Posterior cingulate gyrus (tissue), 11 donors: ENCODE measurements at regions of chrX and their contacts with region 1.

Region 1: GRCh38 chrX:119871599-119872395 is at the starts of genes NDUFA1 and RNF113A:
- DNase-seq: peak; percentile 70 to 97 (median 79)

Region 2: GRCh38 chrX:119852382-119853353 is 19.1 kb before region 1 on chrX and contains the start of gene UPF3B:
- intact Hi-C with region 1: loop called (anchors 2 kb)
- DNase-seq: peak; percentile 84 to 99 (median 90)

Region 3: DNA sequence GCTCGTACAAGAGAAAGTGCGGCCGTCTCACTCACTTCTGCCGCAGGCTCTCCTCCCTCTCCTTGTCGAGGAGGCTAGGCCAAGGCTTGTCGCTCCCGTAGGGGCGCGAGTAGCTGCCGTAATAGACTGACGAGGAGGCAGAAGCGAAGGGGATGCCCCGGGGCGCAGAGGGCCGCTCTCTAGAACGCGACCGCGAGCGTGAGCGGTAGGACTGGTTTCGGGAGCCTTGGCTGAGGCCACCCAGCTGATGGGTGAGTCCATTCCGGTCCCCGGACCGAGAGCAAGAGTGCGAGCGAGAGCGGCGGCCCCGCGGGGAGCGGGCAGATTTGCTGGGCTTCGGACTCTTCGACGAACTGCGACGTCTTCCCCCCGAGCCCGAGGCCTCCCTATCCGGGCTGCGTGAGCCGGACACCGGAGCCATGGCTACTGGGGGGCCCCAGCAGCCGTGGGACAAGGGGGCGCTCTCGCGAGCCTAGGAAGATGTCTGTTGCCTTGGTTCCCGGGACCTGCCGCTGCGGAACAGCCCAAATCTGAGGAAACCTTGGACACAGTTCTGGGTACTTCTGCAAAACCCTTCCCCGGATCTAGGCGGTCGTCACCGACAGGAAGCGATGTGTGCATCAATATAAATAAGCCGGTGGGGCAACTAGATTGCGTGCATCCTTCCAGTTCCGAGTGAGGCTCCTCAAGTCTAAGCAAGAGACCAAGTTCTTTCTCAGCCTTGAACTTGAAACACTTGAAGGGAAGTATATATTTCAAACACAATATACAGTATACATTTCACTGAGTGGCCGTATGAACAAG is 71.6 kb after region 1 on chrX and contains the start of gene NKAP:
- intact Hi-C with region 1: loop called (anchors 10 kb)
- DNase-seq: peak; percentile 51 to 94 (median 71)